T-cell (primary cell): ENCODE measurements at regions of chr17 and their contacts with region 1.

Region 1: DNA sequence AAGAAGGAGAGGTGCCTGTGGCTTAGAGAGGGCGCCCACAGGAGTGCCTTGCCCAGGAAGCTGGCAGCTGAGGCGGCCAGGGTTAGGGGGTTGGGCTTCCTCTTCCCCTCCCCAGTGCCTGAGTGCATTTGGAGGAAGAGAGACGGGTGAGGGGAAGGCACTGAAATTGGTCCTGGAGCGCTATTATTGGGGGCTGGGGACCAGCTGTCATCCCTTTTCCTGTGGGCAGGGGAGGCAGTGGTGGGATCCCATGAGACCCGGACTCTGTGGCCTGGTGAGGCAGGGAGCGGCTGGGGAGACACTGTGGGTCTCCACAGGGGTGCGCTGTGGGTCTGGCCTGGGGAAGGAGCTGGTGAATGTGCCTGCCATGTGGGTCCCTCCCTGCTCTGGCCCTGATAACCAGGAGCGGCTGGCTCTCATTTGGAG is 259.7 kb downstream of the SEC14L1 start:
- DNase-seq: peak; percentile 52 to 82 (median 74)
- ATAC-seq: peak; percentile 71 to 81 (median 73)
- H3K4me3 ChIP-seq: peak overlapping the region; percentile 39 to 68
- H3K4me3 Mint-ChIP-seq: peak overlapping the region; percentile 78 to 92 (median 81)
- H3K27ac ChIP-seq: peak overlapping the region; percentile 54
- H3K27ac Mint-ChIP-seq: peak overlapping the region; percentile 99 to 100
- H3K4me1 ChIP-seq: peaks cover 66 to 97% of the 10 kb centered on the region in 2 experiments
- H3K4me1 Mint-ChIP-seq: peaks cover 93 to 98% (median 96%) of the 10 kb centered on the region in 3 donors
- H3K27me3 ChIP-seq: no peaks in the 10 kb centered on the region
- H3K27me3 Mint-ChIP-seq: no peaks in the 10 kb centered on the region

Region 2: GRCh38 chr17:77331301-77331864 is 69.1 kb before region 1 on chr17:
- CTCF ChIA-PET with region 1: interaction called, 3 to 20 read pairs
- POLR2A ChIA-PET with region 1: interaction called in 1 of 2 experiments, 3 read pairs
- DNase-seq: peak; percentile 83 to 98 (median 94)
- ATAC-seq: peak; percentile 83 to 91 (median 90)
- H3K4me3 ChIP-seq: peak overlapping the region; percentile 23 to 32
- H3K4me3 Mint-ChIP-seq: peak overlapping the region; percentile 74 to 79 (median 78)
- H3K27ac ChIP-seq: peak overlapping the region; percentile 63
- H3K27ac Mint-ChIP-seq: peak overlapping the region; percentile 92 to 93
- H3K4me1 ChIP-seq: peaks cover 26 to 50% of the 10 kb centered on the region in 2 experiments
- H3K4me1 Mint-ChIP-seq: peaks cover 40 to 56% (median 54%) of the 10 kb centered on the region in 3 donors
- H3K27me3 ChIP-seq: no peaks in the 10 kb centered on the region
- H3K27me3 Mint-ChIP-seq: no peaks in the 10 kb centered on the region

Region 3: GRCh38 chr17:77441130-77441920 is 40.9 kb after region 1 on chr17:
- CTCF ChIA-PET with region 1: interaction called in 1 of 2 experiments, 13 read pairs
- POLR2A ChIA-PET with region 1: no interaction called
- DNase-seq: peak in 34 of 35 experiments; percentile 58 to 93 (median 76)
- ATAC-seq: peak; percentile 49 to 65 (median 50)
- H3K4me3 ChIP-seq: peak overlapping the region; percentile 25 to 53
- H3K4me3 Mint-ChIP-seq: peak overlapping the region; percentile 75 to 91 (median 77)
- H3K27ac ChIP-seq: peak overlapping the region; percentile 95
- H3K27ac Mint-ChIP-seq: peak overlapping the region; percentile 99 to 100
- H3K4me1 ChIP-seq: peaks cover 80 to 100% of the 10 kb centered on the region in 2 experiments
- H3K4me1 Mint-ChIP-seq: peaks cover 98 to 100% (median 98%) of the 10 kb centered on the region in 3 donors
- H3K27me3 ChIP-seq: no peaks in the 10 kb centered on the region
- H3K27me3 Mint-ChIP-seq: no peaks in the 10 kb centered on the region

Region 4: DNA sequence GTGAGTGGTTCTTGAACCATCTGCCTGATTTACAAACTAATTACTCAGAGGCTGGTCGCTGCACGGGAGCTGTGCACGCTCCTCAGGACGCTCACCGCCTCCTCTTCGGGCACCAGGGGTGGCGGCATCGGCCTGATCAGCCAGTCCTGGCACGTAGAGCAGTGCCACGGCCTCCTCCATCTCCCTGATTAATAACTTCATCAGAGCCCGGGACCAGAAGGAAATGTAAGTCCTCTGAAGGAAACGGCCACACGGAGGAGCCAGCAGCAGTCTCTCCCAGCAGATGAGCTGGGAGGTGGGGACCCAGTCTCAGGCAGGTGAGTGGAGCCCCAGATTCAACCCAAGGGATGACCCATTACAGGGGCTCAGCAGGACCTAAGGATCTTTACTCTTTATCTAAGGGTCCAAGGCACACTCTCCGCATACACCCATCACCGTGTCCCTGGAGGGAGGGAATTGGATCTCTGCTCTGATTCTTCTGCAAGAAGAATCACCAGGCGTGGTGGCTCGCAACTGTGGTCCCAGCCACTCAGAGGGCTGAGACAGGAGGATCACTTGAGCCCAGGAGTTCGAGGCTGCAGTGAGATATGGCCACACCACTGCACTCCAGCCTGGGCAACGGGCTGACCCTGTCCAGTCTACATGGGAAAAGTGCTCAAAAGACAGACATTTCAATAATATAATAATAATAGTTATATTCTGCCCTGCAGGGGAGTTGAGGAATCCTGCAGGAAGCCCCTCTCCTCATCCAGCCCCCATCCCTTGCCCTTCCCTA is 106.8 kb after region 1 on chr17:
- CTCF ChIA-PET with region 1: no interaction called
- POLR2A ChIA-PET with region 1: no interaction called
- DNase-seq: no peak
- ATAC-seq: peak in 1 of 4 experiments; percentile 14
- H3K4me3 ChIP-seq: no peak overlapping the region
- H3K4me3 Mint-ChIP-seq: no peak overlapping the region
- H3K27ac ChIP-seq: no peak overlapping the region
- H3K27ac Mint-ChIP-seq: no peak overlapping the region
- H3K4me1 ChIP-seq: peaks cover 0 to under 1% of the 10 kb centered on the region in 2 experiments
- H3K4me1 Mint-ChIP-seq: peaks cover 0 to 2% (median 0%) of the 10 kb centered on the region in 3 donors
- H3K27me3 ChIP-seq: no peaks in the 10 kb centered on the region
- H3K27me3 Mint-ChIP-seq: no peaks in the 10 kb centered on the region

Region 5: GRCh38 chr17:77701996-77702395 is 301.5 kb after region 1 on chr17:
- CTCF ChIA-PET with region 1: no interaction called
- POLR2A ChIA-PET with region 1: no interaction called
- DNase-seq: no peak
- ATAC-seq: no peak
- H3K4me3 ChIP-seq: no peak overlapping the region
- H3K4me3 Mint-ChIP-seq: no peak overlapping the region
- H3K27ac ChIP-seq: no peak overlapping the region
- H3K27ac Mint-ChIP-seq: no peak overlapping the region
- H3K4me1 ChIP-seq: peaks cover 5 to 8% of the 10 kb centered on the region in 2 experiments
- H3K4me1 Mint-ChIP-seq: peaks cover 0 to 4% (median 1%) of the 10 kb centered on the region in 3 donors
- H3K27me3 ChIP-seq: peaks cover 0 to 28% of the 10 kb centered on the region in 2 experiments
- H3K27me3 Mint-ChIP-seq: peaks cover 0 to 6% of the 10 kb centered on the region in 2 donors